CD4-positive, alpha-beta memory T cell (primary cell): ENCODE measurements at regions of chr21 and their contacts with region 1.

Region 1: DNA sequence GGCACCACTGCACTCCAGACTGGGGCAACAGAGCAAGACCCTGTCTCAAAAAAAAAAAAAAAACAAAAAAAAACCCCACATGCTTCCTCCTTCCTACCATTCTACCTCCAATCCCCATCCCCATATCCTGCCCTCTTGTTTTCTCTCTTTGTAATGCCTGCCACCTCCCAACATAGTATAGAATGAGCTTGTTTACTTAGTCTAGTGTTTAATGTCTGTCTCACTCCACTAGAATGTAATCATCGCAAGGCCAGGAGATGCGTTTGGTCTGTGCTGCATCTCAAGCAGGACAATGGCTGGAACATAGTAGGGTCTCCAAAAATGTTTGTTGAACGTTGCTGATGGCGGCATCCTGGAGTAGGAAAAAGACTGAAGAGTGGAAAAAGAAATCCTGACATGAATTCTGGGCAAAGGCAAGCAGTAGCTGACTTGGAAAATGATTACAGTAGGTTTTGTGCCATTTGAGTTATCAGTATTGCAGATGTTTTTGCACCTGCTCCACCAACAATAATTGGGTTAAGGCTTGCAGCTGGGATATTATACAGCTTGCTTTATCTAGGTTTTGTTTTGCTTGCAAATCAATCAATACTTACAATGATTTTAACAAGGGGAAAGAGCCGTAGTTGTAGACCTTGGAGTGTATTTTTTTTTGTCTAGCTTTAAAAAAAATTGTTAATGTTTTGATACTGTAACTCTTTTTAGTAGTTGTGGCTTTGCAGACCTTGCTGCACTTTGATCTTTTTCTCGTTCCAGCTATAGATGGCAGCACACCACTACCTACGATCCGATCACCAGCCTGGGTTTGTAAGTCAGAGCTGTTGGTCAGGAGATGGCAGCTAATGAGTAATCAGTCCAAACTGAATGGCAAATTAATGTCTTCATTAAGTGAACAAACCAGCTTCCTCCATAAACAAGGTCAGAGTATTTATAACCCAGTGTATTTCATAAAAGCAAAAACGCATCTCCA is 62.4 kb downstream of the BACH1 start:
- DNase-seq: peak in 3 of 5 donors; percentile 21 to 33 (median 26)
- H3K4me3 ChIP-seq: no peak overlapping the region
- H3K4me3 Mint-ChIP-seq: no peak overlapping the region
- H3K27ac ChIP-seq: no peak overlapping the region
- H3K27ac Mint-ChIP-seq: peak overlapping the region in 4 of 7 donors; percentile 18 to 70 (median 66)
- H3K4me1 ChIP-seq: peaks cover 5% of the 10 kb centered on the region
- H3K4me1 Mint-ChIP-seq: peaks cover 8 to 27% (median 13%) of the 10 kb centered on the region in 4 donors
- H3K27me3 ChIP-seq: no peaks in the 10 kb centered on the region
- H3K27me3 Mint-ChIP-seq: no peaks in the 10 kb centered on the region

Region 2: GRCh38 chr21:29091032-29091431 is 270.1 kb before region 1 on chr21:
- CTCF ChIA-PET with region 1: interaction called, 10 read pairs
- POLR2A ChIA-PET with region 1: no interaction called
- intact Hi-C with region 1: no loop called
- DNase-seq: no peak
- H3K4me3 ChIP-seq: no peak overlapping the region
- H3K4me3 Mint-ChIP-seq: no peak overlapping the region
- H3K27ac ChIP-seq: no peak overlapping the region
- H3K27ac Mint-ChIP-seq: no peak overlapping the region
- H3K4me1 ChIP-seq: no peaks in the 10 kb centered on the region
- H3K4me1 Mint-ChIP-seq: no peaks in the 10 kb centered on the region
- H3K27me3 ChIP-seq: no peaks in the 10 kb centered on the region
- H3K27me3 Mint-ChIP-seq: no peaks in the 10 kb centered on the region

Region 3: GRCh38 chr21:29258626-29259335 is 102.3 kb before region 1 on chr21:
- CTCF ChIA-PET with region 1: no interaction called
- POLR2A ChIA-PET with region 1: no interaction called
- intact Hi-C with region 1: no loop called
- DNase-seq: no peak
- H3K4me3 ChIP-seq: no peak overlapping the region
- H3K4me3 Mint-ChIP-seq: no peak overlapping the region
- H3K27ac ChIP-seq: no peak overlapping the region
- H3K27ac Mint-ChIP-seq: no peak overlapping the region
- H3K4me1 ChIP-seq: no peaks in the 10 kb centered on the region
- H3K4me1 Mint-ChIP-seq: no peaks in the 10 kb centered on the region
- H3K27me3 ChIP-seq: no peaks in the 10 kb centered on the region
- H3K27me3 Mint-ChIP-seq: peaks cover 3 to 6% of the 10 kb centered on the region in 2 donors

Region 4: DNA sequence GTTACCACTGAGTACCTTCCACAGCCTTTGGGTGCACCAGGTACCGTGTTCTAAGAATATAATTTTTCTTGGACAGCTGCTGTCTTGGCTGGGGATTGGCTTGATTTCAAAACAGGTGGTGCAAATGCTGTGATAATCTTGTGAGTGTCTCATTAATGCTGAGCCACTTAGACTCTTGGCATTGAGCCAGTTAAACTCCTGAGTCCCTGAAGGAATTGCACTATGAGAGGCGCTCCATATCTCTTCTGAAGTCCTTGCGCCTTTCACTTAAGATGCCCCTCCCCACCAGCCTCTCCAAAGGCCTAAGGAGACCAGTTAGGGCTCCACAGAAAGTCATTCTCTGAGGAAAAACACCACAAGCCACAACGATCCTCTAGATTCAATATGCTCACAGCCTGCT is 11.4 kb before region 1 on chr21:
- CTCF ChIA-PET with region 1: interaction called, 9 read pairs
- POLR2A ChIA-PET with region 1: interaction called, 10 read pairs
- intact Hi-C with region 1: no loop called
- DNase-seq: no peak
- H3K4me3 ChIP-seq: no peak overlapping the region
- H3K4me3 Mint-ChIP-seq: no peak overlapping the region
- H3K27ac ChIP-seq: no peak overlapping the region
- H3K27ac Mint-ChIP-seq: peak overlapping the region in 1 of 7 donors; percentile 34
- H3K4me1 ChIP-seq: peaks cover 7% of the 10 kb centered on the region
- H3K4me1 Mint-ChIP-seq: peaks cover 9 to 15% (median 12%) of the 10 kb centered on the region in 4 donors
- H3K27me3 ChIP-seq: no peaks in the 10 kb centered on the region
- H3K27me3 Mint-ChIP-seq: no peaks in the 10 kb centered on the region